Head of caudate nucleus (tissue), 42 donors: ENCODE measurements at regions of chr7 and their contacts with region 1.

Region 1: GRCh38 chr7:27160546-27161213 is 4.2 kb upstream of the HOXA7 start:
- DNase-seq: peak; percentile 72 to 94 (median 84)

Region 2: DNA sequence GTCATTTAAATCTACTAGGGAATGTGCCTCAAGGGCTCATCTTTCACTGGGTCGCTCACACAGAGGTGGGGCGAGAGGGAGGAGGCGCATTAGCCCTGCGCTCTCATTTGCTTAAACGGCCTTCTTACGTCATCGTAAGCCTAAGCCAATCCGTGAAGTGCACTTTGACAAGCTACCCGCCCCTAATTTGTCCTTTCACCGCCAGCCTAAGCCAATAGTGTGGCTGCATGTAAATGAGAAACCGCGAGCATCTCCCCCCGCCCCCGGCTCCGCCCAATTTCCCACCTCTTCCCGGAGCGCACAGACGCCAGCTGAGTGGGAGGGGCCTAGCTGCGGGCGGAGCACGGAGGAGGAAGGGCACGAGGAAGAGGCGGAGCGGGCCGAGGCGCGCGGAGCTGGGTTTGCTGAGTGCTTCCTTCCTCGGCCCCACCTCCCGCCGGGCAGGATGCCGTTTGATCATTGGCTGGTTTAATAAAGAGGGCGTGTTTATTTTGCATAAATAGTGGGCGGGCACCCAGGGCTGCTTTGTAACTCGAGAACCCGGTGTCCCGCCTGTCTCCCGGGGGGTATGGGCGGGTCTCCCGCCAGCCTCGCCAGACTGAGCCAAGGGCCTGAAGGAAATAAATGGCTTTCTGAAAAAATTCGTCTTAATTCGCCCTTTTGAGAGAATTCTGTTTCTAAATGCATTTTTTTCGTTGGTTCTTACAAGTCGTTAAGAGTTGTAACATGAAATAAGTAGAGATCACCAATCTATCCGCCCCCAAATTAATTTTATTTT is 1298.2 kb before region 1 on chr7:
- intact Hi-C with region 1: loop called (anchors 10 kb)
- DNase-seq: peak in 28 of 42 donors; percentile 25 to 72 (median 47)

Region 3: GRCh38 chr7:26681819-26682418 is 478.8 kb before region 1 on chr7:
- intact Hi-C with region 1: loop called (anchors 2 kb)
- DNase-seq: peak in 1 of 42 donors; percentile 19